SK-N-SH (cell line): ENCODE measurements at regions of chr13 and their contacts with region 1.

Region 1: DNA sequence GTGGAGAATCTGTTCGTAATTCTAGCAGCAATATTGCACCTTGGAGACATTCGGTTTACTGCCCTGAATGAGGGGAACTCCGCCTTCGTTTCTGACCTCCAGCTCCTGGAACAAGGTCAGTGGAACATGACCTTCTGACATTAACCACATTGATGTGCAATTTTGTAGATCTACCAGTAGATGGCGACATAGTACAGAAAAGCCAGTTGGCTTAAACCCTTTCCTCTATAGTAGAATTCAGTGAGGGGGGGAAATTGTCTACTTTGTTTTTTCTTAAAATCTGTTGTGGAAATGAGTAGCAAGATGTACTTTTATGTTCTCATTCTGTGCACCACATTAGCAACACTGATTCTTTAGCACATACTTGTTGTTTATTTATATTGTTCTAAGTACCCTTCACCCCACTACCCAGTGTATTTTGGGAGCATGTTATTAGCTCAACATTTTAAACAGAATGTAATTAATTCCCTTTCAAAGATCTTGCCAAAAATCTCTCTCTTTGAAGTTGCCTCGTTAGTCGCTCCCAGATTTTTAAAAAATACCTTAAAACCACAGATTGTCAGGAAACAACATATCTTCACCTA is 332.2 kb downstream of the MYO16 start:
- DNase-seq: peak; percentile 63
- H3K4me3 ChIP-seq: no peak overlapping the region
- H3K27ac ChIP-seq: peak overlapping the region in 1 of 2 experiments; percentile 63; a peak in 2 of 4 replicates
- H3K4me1 ChIP-seq: peaks cover 5 to 20% of the 10 kb centered on the region in 2 experiments; a peak in 3 of 4 replicates
- H3K27me3 ChIP-seq: no peaks in the 10 kb centered on the region
- CTCF ChIP-seq: peak; percentile 87
- EP300 ChIP-seq: no peak
- RAD21 ChIP-seq: peak; percentile 97

Region 2: GRCh38 chr13:108950333-108951010 is 11.2 kb before region 1 on chr13:
- CTCF ChIA-PET with region 1: interaction called, 13 read pairs
- POLR2A ChIA-PET with region 1: no interaction called
- DNase-seq: no peak
- H3K4me3 ChIP-seq: no peak overlapping the region
- H3K27ac ChIP-seq: no peak overlapping the region
- H3K4me1 ChIP-seq: peaks cover 0 to 8% of the 10 kb centered on the region in 2 experiments; a peak in 2 of 4 replicates
- H3K27me3 ChIP-seq: no peaks in the 10 kb centered on the region
- CTCF ChIP-seq: no peak
- EP300 ChIP-seq: no peak
- RAD21 ChIP-seq: no peak

Region 3: DNA sequence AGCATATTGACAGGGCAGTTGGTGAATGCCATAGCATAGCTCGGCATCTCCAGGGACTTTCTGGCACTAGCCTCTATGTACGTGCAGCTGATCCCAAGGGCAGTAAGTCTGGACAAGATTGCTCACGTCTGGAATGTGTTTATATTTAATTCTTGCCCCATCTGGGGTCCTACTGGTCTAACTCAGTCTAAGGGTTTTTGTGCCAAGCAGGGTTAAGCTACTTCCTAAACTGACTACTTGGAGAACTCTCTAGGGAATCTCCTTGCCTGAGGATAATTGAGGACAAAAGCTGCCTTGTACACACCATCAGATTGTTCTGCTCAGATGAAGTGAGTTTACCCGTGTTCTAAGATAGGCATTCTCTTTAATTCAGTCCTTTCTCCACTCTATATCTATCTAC is 25.9 kb after region 1 on chr13:
- CTCF ChIA-PET with region 1: no interaction called
- POLR2A ChIA-PET with region 1: no interaction called
- DNase-seq: no peak
- H3K4me3 ChIP-seq: no peak overlapping the region
- H3K27ac ChIP-seq: no peak overlapping the region
- H3K4me1 ChIP-seq: no peaks in the 10 kb centered on the region; a peak in 1 of 4 replicates
- H3K27me3 ChIP-seq: no peaks in the 10 kb centered on the region
- CTCF ChIP-seq: no peak
- EP300 ChIP-seq: no peak
- RAD21 ChIP-seq: no peak

Region 4: DNA sequence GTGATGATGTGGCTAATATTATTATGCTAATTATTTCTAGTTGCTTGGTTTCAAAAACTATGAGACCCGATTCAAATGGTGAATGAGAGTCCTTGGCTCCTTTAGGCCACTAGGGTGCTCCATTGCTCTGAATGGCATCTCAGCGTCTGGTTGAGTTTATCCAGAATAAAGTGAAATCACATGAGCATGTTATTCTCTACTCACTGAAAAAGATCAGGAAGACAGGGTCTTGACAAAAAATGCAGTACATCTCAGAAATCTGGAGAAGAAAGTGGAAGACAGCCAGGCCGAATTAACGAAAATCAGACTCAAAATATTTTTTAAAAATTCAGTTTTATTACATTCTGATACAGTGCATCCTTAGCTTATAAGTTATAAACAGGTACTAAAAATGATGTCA is 184.0 kb after region 1 on chr13:
- CTCF ChIA-PET with region 1: interaction called, 11 read pairs
- POLR2A ChIA-PET with region 1: no interaction called
- DNase-seq: peak; percentile 79
- H3K4me3 ChIP-seq: peak overlapping the region in 1 of 2 experiments; percentile 30; a peak in 1 of 4 replicates
- H3K27ac ChIP-seq: peak overlapping the region; percentile 61 to 90; a peak in 3 of 4 replicates
- H3K4me1 ChIP-seq: peaks cover 31 to 34% of the 10 kb centered on the region in 2 experiments; a peak in 3 of 4 replicates
- H3K27me3 ChIP-seq: no peaks in the 10 kb centered on the region
- CTCF ChIP-seq: peak; percentile 93
- EP300 ChIP-seq: peak in 1 of 2 experiments; percentile 57; a peak in 2 of 4 replicates
- RAD21 ChIP-seq: peak; percentile 98

Region 5: GRCh38 chr13:109790951-109791605 is 829.4 kb after region 1 on chr13:
- CTCF ChIA-PET with region 1: interaction called, 27 read pairs
- POLR2A ChIA-PET with region 1: interaction called, 3 read pairs
- DNase-seq: peak; percentile 69
- H3K4me3 ChIP-seq: peak overlapping the region in 1 of 2 experiments; percentile 12; a peak in 1 of 4 replicates
- H3K27ac ChIP-seq: peak overlapping the region in 1 of 2 experiments; percentile 85; a peak in 2 of 4 replicates
- H3K4me1 ChIP-seq: peaks cover 6 to 27% of the 10 kb centered on the region in 2 experiments; a peak in 3 of 4 replicates
- H3K27me3 ChIP-seq: no peaks in the 10 kb centered on the region
- CTCF ChIP-seq: peak; percentile 61
- EP300 ChIP-seq: 0 out of 4 replicates have a peak, but pooled peaks of 1 of the 2 experiments have one; percentile 23
- RAD21 ChIP-seq: peak; percentile 84